ENCODE measurements at regions of chr6 and their contacts with region 1.

Region 1: GRCh38 chr6:168060521-168060931 is 18.5 kb downstream of the FRMD1 start:
- DNase-seq: peak; percentile 70 to 72
- ATAC-seq: peak; percentile 60 to 88 (median 78)
- H3K4me3 ChIP-seq: no peak overlapping the region
- H3K27ac ChIP-seq: no peak overlapping the region
- H3K4me1 ChIP-seq: peaks cover 4 to 25% (median 18%) of the 10 kb centered on the region in 9 donors
- H3K27me3 ChIP-seq: no peaks in the 10 kb centered on the region
- CTCF ChIP-seq: peak; percentile 62 to 84 (median 75)

Region 2: GRCh38 chr6:168099201-168100010 is 38.9 kb after region 1 on chr6:
- intact Hi-C with region 1: no loop called
- DNase-seq: no peak
- ATAC-seq: no peak
- H3K4me3 ChIP-seq: no peak overlapping the region
- H3K27ac ChIP-seq: no peak overlapping the region
- H3K4me1 ChIP-seq: peaks cover 0 to 19% (median 6%) of the 10 kb centered on the region in 9 donors
- H3K27me3 ChIP-seq: peaks cover 10 to 50% (median 32%) of the 10 kb centered on the region in 7 donors
- CTCF ChIP-seq: no peak

Region 3: DNA sequence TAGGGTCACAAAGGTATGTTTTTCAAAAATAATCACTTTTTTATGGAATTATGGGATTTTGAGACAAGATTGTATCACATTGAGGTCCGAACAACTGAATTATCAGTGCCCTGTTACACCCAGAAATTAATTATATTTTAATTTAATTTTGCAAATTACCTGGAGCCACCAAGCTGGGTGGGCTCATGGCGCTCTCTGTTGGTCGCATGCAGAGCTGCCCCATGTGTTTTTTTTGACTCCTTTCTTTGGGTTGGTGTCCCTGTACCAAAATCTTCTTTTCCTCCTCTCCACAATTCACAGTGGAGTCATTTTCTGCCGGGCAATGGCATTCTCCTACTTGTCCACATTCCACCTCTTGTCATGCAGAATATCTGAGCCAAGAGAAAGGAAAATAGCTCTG is 57.4 kb after region 1 on chr6:
- intact Hi-C with region 1: loop called in 7 of 10 experiments (anchors 5 to 10 kb)
- DNase-seq: no peak
- ATAC-seq: no peak
- H3K4me3 ChIP-seq: no peak overlapping the region
- H3K27ac ChIP-seq: no peak overlapping the region
- H3K4me1 ChIP-seq: peaks cover 0 to 5% (median 0%) of the 10 kb centered on the region in 9 donors
- H3K27me3 ChIP-seq: no peaks in the 10 kb centered on the region
- CTCF ChIP-seq: peak; percentile 42 to 71 (median 66)

Region 4: DNA sequence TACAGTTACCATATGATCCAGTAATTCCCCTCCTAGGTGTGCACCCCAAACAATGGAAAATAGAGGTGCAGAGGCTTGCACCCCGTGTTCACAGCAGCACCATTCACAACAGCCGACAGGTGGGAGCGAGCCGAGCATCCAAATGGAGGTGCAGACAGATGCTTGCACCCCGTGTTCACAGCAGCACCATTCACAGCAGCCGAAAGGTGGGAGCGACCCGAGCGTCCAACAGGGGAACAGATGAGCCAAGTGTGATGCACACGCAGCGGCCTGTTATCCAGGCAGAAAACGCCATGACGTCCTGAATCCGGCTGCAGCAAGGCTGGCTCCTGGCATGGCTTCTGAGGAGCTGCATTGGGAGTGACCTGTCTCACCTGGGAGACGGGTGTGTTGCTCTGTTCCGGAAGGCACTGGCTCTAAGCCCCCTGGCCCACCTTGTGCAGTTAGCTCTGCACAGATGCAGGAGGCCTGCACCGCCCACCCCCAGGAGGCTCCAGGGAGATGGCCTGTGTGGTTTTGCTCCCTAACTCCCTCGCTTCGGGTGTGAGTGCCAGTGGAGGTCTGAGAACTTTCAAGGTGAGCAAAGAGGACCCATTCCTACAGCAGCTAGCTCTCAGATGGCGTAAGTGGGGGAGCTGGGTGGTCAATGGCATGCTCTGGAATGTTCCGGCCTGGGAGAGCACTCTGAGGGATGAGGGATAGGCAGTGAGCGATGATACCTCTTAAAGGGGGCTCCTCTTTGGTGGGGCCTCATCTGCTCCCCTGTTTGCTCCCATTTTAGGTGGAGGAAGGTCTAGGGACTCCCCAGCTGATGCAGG is 66.2 kb after region 1 on chr6:
- intact Hi-C with region 1: loop called in 5 of 10 experiments (anchors 5 to 10 kb)
- DNase-seq: no peak
- ATAC-seq: no peak
- H3K4me3 ChIP-seq: no peak overlapping the region
- H3K27ac ChIP-seq: no peak overlapping the region
- H3K4me1 ChIP-seq: peaks cover 0 to 3% (median 0%) of the 10 kb centered on the region in 9 donors
- H3K27me3 ChIP-seq: no peaks in the 10 kb centered on the region
- CTCF ChIP-seq: no peak

Region 5: DNA sequence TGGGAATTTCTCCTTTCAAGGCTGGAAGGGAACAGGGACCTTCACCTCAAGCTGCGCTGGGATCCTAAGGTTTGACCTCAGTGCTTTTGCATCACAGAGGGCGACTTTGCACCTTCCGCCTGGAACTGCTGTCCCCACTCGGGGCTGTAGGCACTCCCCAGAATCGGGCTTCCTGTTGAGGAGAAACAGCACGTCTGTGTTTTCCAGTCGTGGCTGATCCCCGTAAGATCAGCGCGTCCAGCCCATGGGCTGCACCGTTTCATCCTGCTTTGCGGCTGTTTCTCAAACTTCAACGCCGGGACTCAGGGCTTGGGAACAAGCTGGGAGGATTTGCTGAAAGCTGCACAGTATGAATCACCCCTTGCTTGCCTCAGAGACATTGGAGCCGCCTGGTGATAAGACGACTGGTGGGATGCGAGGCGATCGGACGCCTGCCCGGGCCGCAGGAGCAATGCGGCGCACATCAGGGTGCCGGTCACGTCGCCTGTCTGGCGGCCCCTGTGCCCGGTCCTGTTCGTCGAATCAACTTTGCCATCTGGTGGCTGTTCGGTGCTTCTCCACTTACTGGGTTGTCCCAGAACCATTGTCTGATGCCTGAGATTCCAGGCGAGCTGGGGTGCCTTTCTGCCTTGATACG is 72.1 kb after region 1 on chr6:
- intact Hi-C with region 1: loop called in 6 of 10 experiments (anchors 1 to 10 kb)
- DNase-seq: peak; percentile 64 to 75
- ATAC-seq: peak; percentile 71 to 91 (median 84)
- H3K4me3 ChIP-seq: peak overlapping the region in 9 of 10 donors; percentile 1 to 45 (median 39)
- H3K27ac ChIP-seq: peak overlapping the region in 8 of 10 donors; percentile 8 to 80 (median 36)
- H3K4me1 ChIP-seq: peaks cover 2 to 29% (median 19%) of the 10 kb centered on the region in 9 donors
- H3K27me3 ChIP-seq: no peaks in the 10 kb centered on the region
- CTCF ChIP-seq: peak; percentile 36 to 83 (median 65)

Region 6: GRCh38 chr6:168218785-168219566 is 158.4 kb after region 1 on chr6:
- intact Hi-C with region 1: no loop called
- DNase-seq: peak; percentile 39 to 47
- ATAC-seq: peak; percentile 75 to 95 (median 80)
- H3K4me3 ChIP-seq: no peak overlapping the region
- H3K27ac ChIP-seq: peak overlapping the region in 8 of 10 donors; percentile 7 to 77 (median 50)
- H3K4me1 ChIP-seq: peaks cover 0 to 23% (median 0%) of the 10 kb centered on the region in 9 donors
- H3K27me3 ChIP-seq: peaks cover 0 to 38% (median 8%) of the 10 kb centered on the region in 7 donors
- CTCF ChIP-seq: no peak

Region 7: GRCh38 chr6:168355716-168356449 is 295.4 kb after region 1 on chr6:
- intact Hi-C with region 1: loop called in 1 of 10 experiments (anchors 10 kb)
- DNase-seq: peak; percentile 46 to 57
- ATAC-seq: peak; percentile 71 to 96 (median 89)
- H3K4me3 ChIP-seq: no peak overlapping the region
- H3K27ac ChIP-seq: no peak overlapping the region
- H3K4me1 ChIP-seq: peaks cover 0 to 8% (median 0%) of the 10 kb centered on the region in 9 donors
- H3K27me3 ChIP-seq: peaks cover 0 to 28% (median 0%) of the 10 kb centered on the region in 7 donors
- CTCF ChIP-seq: peak; percentile 39 to 79 (median 74)

Measured in heart right ventricle (tissue), 16 donors.